ENCODE measurements at regions of chr13 and their contacts with region 1.

Region 1: DNA sequence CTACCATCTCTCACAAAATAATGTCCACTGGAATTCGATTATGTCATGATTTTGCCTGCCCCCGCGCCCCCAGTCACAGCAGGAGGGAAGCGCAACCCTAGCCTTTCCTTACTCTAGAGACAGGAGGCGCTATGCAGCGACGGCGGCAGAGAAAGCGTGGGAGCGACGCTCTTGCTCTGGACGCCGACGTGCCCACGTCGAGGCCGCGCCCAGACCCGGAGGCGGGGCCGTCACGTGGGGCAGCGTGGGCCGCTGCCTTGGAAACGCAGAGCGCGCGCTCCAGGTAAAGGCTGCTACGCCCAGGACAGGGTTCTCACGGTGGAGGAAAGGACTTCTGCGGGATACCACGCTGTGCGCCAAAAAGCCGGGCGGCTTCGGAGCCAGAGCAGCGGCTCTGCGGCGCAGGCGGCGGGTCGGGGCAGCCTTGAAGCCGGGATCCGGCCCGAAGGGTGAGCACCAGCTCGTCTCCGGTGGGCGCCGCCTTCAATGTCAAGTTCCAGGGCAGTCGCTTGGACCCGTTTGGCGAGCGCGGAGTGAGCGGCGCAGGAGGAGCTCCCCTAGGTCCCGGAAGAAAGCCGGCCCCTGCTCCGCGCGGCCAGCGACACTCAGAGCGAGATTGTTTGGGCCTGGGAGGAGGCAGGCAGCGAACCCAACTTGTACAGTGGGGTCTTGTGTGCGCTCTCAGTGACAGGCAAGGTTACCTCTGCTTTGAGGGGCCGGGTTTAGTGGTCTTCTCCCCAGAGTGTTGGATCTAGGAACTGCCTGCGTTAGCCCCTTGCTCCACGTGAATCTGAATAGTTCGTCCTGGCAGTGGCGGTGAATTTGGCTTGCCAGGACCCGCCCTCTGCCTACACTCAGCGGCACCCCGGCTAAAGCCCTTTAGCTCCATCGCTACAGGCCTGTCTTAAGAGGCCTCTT is 121.7 kb downstream of the MRPL57 start:
- DNase-seq: peak; percentile 93
- H3K4me3 ChIP-seq: peak overlapping the region; percentile 86 to 96 (median 90)
- H3K27ac ChIP-seq: peak overlapping the region; percentile 91
- H3K4me1 ChIP-seq: peaks cover 9% of the 10 kb centered on the region
- H3K27me3 ChIP-seq: no peaks in the 10 kb centered on the region
- CTCF ChIP-seq: peak; percentile 86 to 94

Region 2: GRCh38 chr13:21060987-21061763 is 237.0 kb before region 1 on chr13 and contains the start of gene LATS2:
- CTCF ChIA-PET with region 1: no interaction called
- dilution Hi-C with region 1: no loop called
- in situ Hi-C with region 1: no loop called
- intact Hi-C with region 1: loop called (anchors 1 kb)
- DNase-seq: peak; percentile 87
- H3K4me3 ChIP-seq: peak within 1 kb of the TSS; percentile 62 to 87 (median 77)
- H3K27ac ChIP-seq: peak within 1 kb of the TSS; percentile 80
- H3K4me1 ChIP-seq: peaks cover 7% of the 10 kb centered on the region
- H3K27me3 ChIP-seq: no peaks in the 10 kb centered on the region
- CTCF ChIP-seq: peak in 1 of 2 donors; percentile 23
- total RNA-seq, gene LATS2: 18.0 to 19.8 TPM

Region 3: DNA sequence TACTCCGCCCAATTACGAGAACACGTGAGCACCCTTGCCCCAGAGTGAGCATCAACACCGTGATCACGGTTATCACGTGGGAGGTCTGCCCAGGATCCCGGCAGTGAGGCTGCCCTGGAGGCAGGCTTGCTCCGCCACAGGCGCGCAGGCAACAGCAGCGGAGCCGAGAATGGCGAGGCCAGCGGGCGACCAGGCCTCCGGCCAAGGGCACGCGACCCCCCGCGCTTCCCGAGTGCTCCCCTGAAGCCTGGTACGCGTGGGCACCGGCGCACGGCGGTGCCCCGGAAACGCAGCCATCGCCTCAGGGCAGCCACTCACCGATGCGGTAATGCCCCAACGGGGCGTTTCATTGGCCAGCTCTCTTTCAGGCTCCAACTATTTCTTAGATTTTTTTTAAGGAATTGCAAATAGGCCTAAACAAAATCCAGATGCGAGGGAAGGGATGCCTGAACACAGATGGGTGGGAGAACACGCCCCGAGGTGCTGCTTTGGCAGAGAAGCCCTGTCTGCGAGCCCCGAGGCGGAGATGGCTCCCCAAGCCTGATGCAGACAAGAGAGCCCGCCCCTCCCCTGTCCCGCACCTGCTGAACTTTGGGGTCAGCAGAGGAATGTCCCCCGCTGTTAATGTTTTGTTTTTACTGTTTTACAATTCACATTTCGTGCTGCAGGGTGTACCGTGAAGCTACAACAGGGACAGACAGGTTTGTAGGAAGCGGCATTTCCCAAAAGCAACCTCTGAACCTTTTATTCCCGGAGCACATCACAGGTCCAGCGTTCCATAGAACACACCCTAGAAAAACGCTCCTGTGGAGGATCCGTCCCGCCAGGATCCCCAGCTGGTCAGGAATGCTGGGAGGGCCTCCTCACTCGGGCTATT is 28.2 kb after region 1 on chr13:
- CTCF ChIA-PET with region 1: no interaction called
- dilution Hi-C with region 1: no loop called
- in situ Hi-C with region 1: no loop called
- intact Hi-C with region 1: loop called (anchors 2 kb)
- DNase-seq: peak; percentile 25
- H3K4me3 ChIP-seq: peak overlapping the region; percentile 18 to 52 (median 48)
- H3K27ac ChIP-seq: no peak overlapping the region
- H3K4me1 ChIP-seq: peaks cover 4% of the 10 kb centered on the region
- H3K27me3 ChIP-seq: no peaks in the 10 kb centered on the region
- CTCF ChIP-seq: no peak

Region 4: DNA sequence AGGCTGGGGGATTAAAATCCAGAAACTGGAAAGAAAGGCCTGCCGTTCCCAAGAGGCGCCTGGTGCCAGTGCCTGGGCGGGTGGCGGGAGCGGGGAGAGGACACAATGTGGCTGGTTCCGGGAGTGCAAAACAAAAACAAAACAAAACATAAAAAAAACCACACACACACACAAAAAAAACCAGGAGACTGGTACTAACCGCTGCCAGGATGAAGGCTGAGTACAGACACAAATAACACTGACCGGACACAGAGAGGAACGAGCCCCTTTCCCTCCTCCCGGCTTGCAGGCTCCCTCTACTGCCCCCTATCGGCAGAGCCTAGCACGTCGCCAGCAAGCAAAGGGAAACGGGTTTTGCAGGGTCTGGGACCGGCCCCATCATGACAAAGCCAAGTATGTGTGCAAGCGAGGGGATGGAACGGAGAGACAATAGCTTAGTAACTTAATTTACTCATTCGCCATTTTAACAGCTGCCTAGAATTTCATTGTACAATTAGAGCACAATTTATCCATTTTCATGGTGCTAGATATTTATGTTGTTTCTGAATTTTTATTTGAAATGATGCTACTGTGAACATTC is 178.8 kb after region 1 on chr13:
- CTCF ChIA-PET with region 1: interaction called, 18 read pairs
- dilution Hi-C with region 1: no loop called
- in situ Hi-C with region 1: loop called (anchors 10 kb)
- intact Hi-C with region 1: loop called (anchors 1 kb)
- DNase-seq: peak; percentile 73
- H3K4me3 ChIP-seq: peak overlapping the region in 2 of 3 experiments; percentile 0 to 2
- H3K27ac ChIP-seq: no peak overlapping the region
- H3K4me1 ChIP-seq: no peaks in the 10 kb centered on the region
- H3K27me3 ChIP-seq: no peaks in the 10 kb centered on the region
- CTCF ChIP-seq: peak; percentile 85 to 99

Region 5: DNA sequence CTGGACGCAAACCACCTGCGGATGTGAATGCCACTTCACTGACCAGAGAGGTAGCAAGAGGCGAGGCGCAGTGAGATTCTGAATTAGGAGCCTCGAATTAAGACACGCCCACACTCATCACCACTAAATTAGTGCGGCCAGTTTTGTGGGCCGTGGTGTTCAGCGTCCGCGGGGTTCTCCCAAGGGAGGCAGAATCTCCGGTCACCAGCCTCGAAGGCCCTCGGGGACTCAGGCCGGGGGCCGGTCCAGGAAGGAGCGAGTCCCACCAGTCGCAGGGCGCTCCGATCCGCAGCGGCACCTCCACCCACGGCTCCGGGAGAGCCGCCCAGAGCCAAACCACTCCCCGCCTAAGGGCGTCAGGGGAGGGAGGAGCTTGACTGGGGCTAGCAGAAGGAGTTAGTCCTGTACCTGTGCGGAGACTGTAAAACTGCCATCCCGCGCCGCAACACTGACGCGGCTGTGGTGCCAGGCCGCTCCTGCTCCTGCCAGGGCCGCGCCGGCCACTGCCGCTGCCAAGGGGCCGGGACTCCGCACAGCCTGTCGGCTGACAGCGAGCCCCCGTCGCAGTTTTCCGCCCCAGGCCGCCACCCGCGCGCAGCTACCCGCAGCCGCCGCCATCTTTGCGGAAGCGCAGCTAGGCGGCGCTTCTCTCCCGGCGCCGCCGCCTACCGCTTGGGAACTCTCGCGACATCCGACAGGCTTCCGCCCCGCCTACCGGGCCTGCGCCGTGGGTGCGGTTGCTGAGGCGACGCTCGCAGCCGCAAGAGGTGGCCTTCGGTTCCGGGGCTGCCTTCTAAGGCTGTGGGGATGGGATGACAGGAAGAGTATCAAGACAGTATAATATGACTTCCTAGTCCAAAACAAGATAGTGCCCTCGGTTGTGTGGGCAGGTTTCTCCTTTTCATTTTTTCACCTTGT is 305.6 kb after region 1 on chr13 and contains the start of gene MICU2:
- CTCF ChIA-PET with region 1: no interaction called
- dilution Hi-C with region 1: no loop called
- in situ Hi-C with region 1: no loop called
- intact Hi-C with region 1: loop called (anchors 5 kb)
- DNase-seq: peak; percentile 94
- H3K4me3 ChIP-seq: peak within 1 kb of the TSS; percentile 60 to 83 (median 76)
- H3K27ac ChIP-seq: peak within 1 kb of the TSS; percentile 77
- H3K4me1 ChIP-seq: no peaks in the 10 kb centered on the region
- H3K27me3 ChIP-seq: no peaks in the 10 kb centered on the region
- CTCF ChIP-seq: no peak
- total RNA-seq, gene MICU2: 22.0 to 37.7 TPM

Region 6: DNA sequence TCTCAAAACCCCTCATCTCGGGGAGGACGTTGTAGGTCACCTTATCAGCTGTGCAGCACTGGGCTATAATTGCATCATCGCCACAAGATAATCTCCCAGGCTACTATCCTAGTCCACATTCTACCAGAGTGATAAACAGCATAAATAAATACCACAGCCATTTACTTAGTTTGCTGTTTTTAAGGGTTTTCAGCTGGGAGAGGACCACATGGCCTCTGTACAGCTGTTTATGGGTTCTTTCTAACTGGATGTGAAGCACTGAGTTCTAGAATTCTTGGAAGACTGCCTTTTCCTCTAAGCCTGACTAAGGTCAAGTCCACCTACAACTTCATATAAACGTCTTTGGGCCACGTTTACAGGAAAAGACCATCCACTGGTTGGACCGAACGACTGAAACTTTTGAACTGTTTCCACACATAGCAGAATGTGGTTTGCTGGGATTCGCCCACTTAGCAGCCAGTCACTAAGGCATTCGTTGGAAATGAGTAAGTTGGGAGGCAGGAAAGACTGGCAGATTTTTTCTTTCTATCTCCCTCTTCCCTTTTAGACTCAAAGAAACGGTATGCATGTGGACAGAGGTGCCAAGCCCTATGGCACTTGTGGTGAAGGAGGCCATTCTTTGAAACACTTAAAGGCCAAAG is 1130.1 kb after region 1 on chr13:
- CTCF ChIA-PET with region 1: no interaction called
- dilution Hi-C with region 1: no loop called
- in situ Hi-C with region 1: no loop called
- intact Hi-C with region 1: no loop called
- DNase-seq: no peak
- H3K4me3 ChIP-seq: no peak overlapping the region
- H3K27ac ChIP-seq: no peak overlapping the region
- H3K4me1 ChIP-seq: no peaks in the 10 kb centered on the region
- H3K27me3 ChIP-seq: no peaks in the 10 kb centered on the region
- CTCF ChIP-seq: no peak